ENCODE measurements at regions of chr5 and their contacts with region 1.

Region 1: GRCh38 chr5:153964880-153965645 is 73.6 kb downstream of the FAM114A2 start:
- DNase-seq: peak; percentile 52
- H3K4me3 ChIP-seq: no peak overlapping the region
- H3K27ac ChIP-seq: no peak overlapping the region
- H3K4me1 ChIP-seq: no peaks in the 10 kb centered on the region
- H3K27me3 ChIP-seq: no peaks in the 10 kb centered on the region
- CTCF ChIP-seq: peak; percentile 79 to 80
- POLR2A ChIP-seq: no peak

Region 2: DNA sequence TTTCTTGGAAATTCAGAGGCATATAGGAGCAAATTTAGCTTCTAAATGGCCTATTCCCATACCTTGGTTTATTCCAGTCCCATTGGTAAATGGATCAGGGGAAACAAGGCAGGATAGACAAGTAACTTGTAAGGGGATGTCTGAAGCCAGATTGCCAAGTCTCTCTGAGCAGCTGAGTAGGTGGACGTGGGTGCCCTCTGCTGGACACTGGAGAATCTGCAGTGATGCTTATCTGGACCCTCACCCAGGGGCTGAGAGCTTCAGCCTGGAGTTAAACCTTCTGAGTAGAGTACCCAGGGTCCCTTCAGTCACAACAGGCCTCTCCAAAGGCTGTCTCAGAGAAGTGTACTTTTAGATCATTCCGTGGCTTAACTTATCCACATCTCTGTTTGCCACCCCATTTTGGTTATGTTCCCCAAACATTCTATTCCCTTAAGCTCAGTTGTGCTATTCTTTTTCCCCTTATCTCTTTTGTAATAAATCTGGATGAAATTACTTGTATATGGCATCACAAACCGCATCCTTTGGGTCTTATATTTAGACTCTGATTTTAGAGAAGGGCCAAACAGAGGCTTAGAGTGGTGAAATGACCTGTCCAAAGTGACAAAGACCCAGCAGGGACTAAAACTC is 1822.1 kb before region 1 on chr5:
- CTCF ChIA-PET with region 1: interaction called, 13 read pairs
- POLR2A ChIA-PET with region 1: no interaction called
- dilution Hi-C with region 1: no loop called
- intact Hi-C with region 1: no loop called
- DNase-seq: peak; percentile 47
- H3K4me3 ChIP-seq: no peak overlapping the region
- H3K27ac ChIP-seq: no peak overlapping the region
- H3K4me1 ChIP-seq: no peaks in the 10 kb centered on the region
- H3K27me3 ChIP-seq: no peaks in the 10 kb centered on the region
- CTCF ChIP-seq: peak; percentile 76 to 94
- POLR2A ChIP-seq: no peak

Region 3: DNA sequence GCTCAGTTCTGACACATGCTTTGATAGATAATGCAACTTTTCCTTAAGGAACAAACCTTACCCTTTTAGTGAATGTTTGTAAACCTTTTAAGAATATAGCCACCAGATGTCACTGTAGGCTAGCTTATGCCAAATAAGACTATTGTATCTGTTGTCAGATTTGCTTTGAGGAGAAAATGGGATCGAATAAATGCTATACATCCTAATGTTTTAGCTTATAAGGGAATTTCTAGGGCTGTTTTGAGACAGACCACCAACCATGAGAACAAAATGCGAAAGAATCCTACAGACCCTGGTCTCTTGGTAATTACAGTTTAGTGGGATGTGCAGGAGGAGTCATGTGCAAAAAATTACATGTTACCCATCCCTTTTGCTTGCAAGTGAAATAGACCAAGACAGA is 1432.3 kb before region 1 on chr5:
- CTCF ChIA-PET with region 1: interaction called, 109 read pairs
- POLR2A ChIA-PET with region 1: no interaction called
- dilution Hi-C with region 1: no loop called
- intact Hi-C with region 1: loop called (anchors 1 kb)
- DNase-seq: peak; percentile 47
- H3K4me3 ChIP-seq: no peak overlapping the region
- H3K27ac ChIP-seq: no peak overlapping the region
- H3K4me1 ChIP-seq: no peaks in the 10 kb centered on the region
- H3K27me3 ChIP-seq: no peaks in the 10 kb centered on the region
- CTCF ChIP-seq: peak in 1 of 2 donors; percentile 5
- POLR2A ChIP-seq: no peak

Region 4: DNA sequence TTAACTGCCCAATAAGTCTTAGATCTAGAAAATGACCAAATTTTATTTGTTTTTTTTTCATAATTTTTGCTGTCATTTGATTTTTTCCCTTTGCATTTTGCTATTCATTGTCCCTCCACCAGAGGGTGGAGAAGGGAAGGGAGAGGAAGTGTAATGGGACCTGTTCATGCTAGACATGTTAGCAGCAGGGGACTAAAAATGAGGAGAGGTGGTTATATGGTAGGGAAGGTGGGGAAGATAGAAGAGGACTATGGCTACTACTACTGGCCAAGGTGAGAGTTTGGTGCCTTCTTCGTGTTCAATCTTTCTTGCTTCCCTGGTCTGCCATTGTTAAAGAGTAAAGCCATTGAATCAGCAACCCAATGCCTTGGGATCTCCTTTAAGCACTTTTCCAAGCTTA is 468.2 kb before region 1 on chr5:
- CTCF ChIA-PET with region 1: interaction called, 171 read pairs
- POLR2A ChIA-PET with region 1: no interaction called
- dilution Hi-C with region 1: no loop called
- intact Hi-C with region 1: loop called (anchors 1 kb)
- DNase-seq: peak; percentile 69
- H3K4me3 ChIP-seq: no peak overlapping the region
- H3K27ac ChIP-seq: no peak overlapping the region
- H3K4me1 ChIP-seq: no peaks in the 10 kb centered on the region
- H3K27me3 ChIP-seq: peaks cover 7% of the 10 kb centered on the region in 2 experiments
- CTCF ChIP-seq: peak; percentile 50 to 66
- POLR2A ChIP-seq: no peak

Region 5: DNA sequence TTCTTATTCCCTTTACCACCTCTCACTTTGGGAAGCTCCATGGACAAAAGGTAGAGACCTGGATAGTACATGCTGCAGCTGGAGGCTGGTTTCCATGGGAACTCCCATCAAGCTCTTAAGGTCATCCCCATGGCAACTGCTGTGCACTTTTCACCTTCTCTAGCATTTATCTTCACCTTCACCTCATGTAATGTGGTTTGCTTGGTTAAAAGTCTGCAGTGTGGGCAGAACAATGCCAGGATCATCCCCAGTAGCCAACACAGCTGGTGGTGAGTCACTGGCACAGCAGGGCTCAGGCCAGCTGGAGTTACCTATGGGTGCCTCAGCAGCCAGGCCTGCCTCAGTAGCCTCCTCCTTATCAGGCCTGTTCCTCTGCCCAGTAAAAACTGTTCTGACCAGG is 264.1 kb before region 1 on chr5:
- CTCF ChIA-PET with region 1: no interaction called
- POLR2A ChIA-PET with region 1: no interaction called
- dilution Hi-C with region 1: no loop called
- intact Hi-C with region 1: no loop called
- DNase-seq: no peak
- H3K4me3 ChIP-seq: no peak overlapping the region
- H3K27ac ChIP-seq: no peak overlapping the region
- H3K4me1 ChIP-seq: no peaks in the 10 kb centered on the region
- H3K27me3 ChIP-seq: no peaks in the 10 kb centered on the region
- CTCF ChIP-seq: no peak
- POLR2A ChIP-seq: no peak

Region 6: GRCh38 chr5:153782589-153783361 is 182.3 kb before region 1 on chr5:
- CTCF ChIA-PET with region 1: no interaction called
- POLR2A ChIA-PET with region 1: no interaction called
- dilution Hi-C with region 1: no loop called
- intact Hi-C with region 1: loop called (anchors 10 kb)
- DNase-seq: no peak
- H3K4me3 ChIP-seq: no peak overlapping the region
- H3K27ac ChIP-seq: no peak overlapping the region
- H3K4me1 ChIP-seq: no peaks in the 10 kb centered on the region
- H3K27me3 ChIP-seq: no peaks in the 10 kb centered on the region
- CTCF ChIP-seq: no peak
- POLR2A ChIP-seq: no peak

Region 7: GRCh38 chr5:153807801-153808200 is 157.3 kb before region 1 on chr5:
- CTCF ChIA-PET with region 1: no interaction called
- POLR2A ChIA-PET with region 1: no interaction called
- dilution Hi-C with region 1: no loop called
- intact Hi-C with region 1: no loop called
- DNase-seq: no peak
- H3K4me3 ChIP-seq: no peak overlapping the region
- H3K27ac ChIP-seq: no peak overlapping the region
- H3K4me1 ChIP-seq: no peaks in the 10 kb centered on the region
- H3K27me3 ChIP-seq: no peaks in the 10 kb centered on the region
- CTCF ChIP-seq: no peak
- POLR2A ChIP-seq: no peak

Measured in endothelial cell of umbilical vein (primary cell).